ENCODE measurements at regions of chr17 and their contacts with region 1.

Region 1: DNA sequence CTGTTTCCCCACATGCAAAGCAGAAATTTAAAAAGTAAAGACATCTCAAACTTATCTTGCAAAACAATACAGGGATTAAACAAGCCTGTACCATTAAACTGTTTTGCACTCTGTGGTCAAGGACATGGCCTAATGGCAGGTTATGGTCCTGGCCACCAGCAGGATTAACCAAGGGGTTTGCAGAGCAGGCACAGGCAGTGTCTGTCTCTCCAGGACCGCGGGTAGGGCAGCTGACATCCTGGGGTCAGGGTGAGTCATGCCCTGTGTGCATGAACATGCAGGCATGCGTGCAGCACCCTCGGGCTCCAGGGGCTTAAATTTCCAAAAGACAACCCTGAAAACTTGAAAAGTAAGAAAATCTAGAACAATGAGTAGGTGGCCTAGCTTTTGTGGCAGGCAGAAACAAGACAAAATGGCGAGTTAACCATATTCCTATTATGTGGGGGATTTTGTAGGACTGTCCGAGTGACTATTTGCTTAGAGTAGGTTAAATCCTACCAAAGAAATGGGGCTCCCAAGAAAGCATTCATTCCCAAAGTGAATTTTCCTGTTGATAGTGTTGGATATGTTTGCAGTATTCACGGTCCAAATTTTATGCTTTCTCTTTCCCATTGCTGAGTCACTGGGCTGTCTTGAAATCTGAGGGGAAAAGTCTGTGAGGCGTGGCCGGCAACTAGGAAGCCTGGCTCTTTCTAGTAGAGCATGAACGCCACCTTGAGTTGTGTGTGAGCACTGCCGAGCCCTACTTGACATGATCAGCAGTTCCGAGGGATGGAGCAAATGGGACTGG is 158.4 kb upstream of the FAM20A start:
- DNase-seq: peak; percentile 86 to 89
- H3K4me3 ChIP-seq: peak overlapping the region; percentile 34
- H3K4me3 Mint-ChIP-seq: peak overlapping the region; percentile 77
- H3K27ac Mint-ChIP-seq: peak overlapping the region; percentile 89
- H3K4me1 ChIP-seq: peaks cover 13% of the 10 kb centered on the region
- H3K4me1 Mint-ChIP-seq: peaks cover 7% of the 10 kb centered on the region
- H3K27me3 ChIP-seq: no peaks in the 10 kb centered on the region
- H3K27me3 Mint-ChIP-seq: no peaks in the 10 kb centered on the region
- CTCF ChIP-seq: peak; percentile 92 to 93

Region 2: DNA sequence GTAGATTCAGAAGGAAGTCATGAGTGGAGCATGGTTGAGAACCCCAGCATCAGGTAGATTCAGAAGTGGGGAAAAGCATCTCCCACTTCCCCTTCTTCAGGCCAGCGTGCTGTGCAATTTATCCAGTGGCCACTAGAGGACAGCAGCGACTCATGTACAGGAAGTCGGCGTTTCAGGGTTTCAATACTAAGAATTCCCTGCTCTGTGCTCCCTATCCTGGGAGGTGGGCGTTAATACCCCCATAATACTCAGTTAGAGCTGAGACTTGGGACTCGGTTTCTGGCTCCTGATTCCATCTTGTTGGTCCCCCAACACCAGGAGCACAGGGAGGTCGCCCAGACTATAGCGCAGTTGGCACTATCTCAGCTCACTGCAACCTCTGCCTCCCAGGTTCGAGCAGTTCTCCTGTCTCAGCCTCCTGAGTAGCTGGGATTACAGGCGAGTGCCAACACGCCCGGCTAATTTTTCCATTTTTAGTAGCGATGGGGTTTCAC is 587.0 kb before region 1 on chr17:
- CTCF ChIA-PET with region 1: no interaction called
- POLR2A ChIA-PET with region 1: no interaction called
- intact Hi-C with region 1: loop called (anchors 10 kb)
- DNase-seq: peak; percentile 78
- H3K4me3 ChIP-seq: no peak overlapping the region
- H3K4me3 Mint-ChIP-seq: no peak overlapping the region
- H3K27ac Mint-ChIP-seq: no peak overlapping the region
- H3K4me1 ChIP-seq: no peaks in the 10 kb centered on the region
- H3K4me1 Mint-ChIP-seq: no peaks in the 10 kb centered on the region
- H3K27me3 ChIP-seq: no peaks in the 10 kb centered on the region; the same call in 1 of the 2 replicates
- H3K27me3 Mint-ChIP-seq: no peaks in the 10 kb centered on the region
- CTCF ChIP-seq: peak; percentile 92 to 98

Region 3: DNA sequence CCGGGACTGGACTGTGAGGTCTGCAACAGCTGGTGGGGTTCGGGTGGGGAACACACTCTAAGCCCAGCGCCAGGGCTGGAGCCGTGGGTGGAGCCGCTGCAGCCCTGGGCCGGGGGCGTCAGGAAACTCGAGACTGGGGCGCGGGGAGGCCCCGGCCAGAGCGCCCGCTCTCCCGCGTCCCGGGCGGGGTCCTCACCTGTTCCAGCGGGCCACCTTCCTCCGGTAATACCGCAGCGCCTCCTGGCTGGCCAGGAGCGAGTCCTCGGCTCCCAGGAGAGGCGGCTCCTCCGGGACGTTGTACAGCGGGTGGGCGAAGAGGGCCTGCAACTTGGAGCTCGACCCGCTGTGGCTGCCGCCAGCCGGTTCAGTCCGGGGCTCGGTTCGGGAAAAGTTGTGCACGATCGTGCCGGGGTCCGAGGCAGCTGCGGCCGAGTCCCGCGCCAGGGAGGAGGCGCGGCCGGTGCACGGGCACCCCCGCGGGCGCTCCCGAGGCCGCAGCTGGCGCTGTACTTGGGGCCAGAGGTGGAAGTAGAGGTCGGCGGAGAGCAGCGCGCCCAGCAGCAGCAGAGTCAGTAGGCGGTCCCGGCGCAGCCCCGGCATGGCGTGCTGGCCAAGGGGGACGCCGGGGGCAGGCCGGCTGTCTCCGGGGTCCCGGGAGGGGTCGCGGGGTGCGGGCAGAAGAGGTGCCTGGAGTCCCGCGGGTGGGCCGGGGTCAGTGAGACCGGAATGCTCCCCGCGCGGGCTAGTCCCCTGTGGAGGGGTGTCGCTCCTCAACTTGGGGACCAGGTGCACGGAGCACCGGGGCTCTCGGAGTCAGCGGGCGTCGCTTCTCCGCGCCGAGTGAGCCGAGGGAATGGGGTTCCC is 159.2 kb before region 1 on chr17:
- CTCF ChIA-PET with region 1: interaction called, 4 read pairs
- POLR2A ChIA-PET with region 1: no interaction called
- intact Hi-C with region 1: loop called (anchors 1 kb)
- DNase-seq: peak; percentile 49 to 66
- H3K4me3 ChIP-seq: peak overlapping the region; percentile 45
- H3K4me3 Mint-ChIP-seq: peak overlapping the region; percentile 61
- H3K27ac Mint-ChIP-seq: peak overlapping the region; percentile 63
- H3K4me1 ChIP-seq: peaks cover 15% of the 10 kb centered on the region
- H3K4me1 Mint-ChIP-seq: peaks cover 15% of the 10 kb centered on the region
- H3K27me3 ChIP-seq: no peaks in the 10 kb centered on the region
- H3K27me3 Mint-ChIP-seq: peaks cover 9% of the 10 kb centered on the region
- CTCF ChIP-seq: peak; percentile 27 to 61

Region 4: DNA sequence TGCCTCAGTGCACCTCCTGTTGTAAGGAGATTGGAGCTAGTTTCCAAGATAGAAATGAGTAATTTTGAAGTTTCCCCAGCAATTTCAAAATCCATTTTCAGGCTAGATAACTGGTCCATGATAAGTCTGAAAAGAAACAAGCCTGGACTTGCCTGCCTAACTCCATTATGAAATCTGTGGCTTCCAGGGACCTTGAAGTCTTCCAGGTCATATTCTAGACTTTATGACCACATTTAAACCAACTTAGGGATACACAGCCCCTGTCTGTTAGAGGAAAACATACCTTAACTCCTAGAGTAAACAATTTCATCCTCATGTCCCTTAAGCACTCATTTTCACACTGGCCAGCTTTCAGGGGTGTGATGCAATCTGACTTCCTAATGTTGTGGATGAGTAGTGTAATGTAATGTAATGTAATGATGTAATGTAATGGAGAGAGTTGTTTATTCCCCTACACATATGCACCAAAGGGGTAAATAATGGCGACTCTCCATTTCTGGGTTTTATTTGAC is 61.6 kb before region 1 on chr17:
- CTCF ChIA-PET with region 1: no interaction called
- POLR2A ChIA-PET with region 1: no interaction called
- intact Hi-C with region 1: loop called (anchors 2 kb)
- DNase-seq: peak; percentile 24 to 56
- H3K4me3 ChIP-seq: no peak overlapping the region
- H3K4me3 Mint-ChIP-seq: no peak overlapping the region
- H3K27ac Mint-ChIP-seq: no peak overlapping the region
- H3K4me1 ChIP-seq: peaks cover 41% of the 10 kb centered on the region
- H3K4me1 Mint-ChIP-seq: peaks cover 22% of the 10 kb centered on the region
- H3K27me3 ChIP-seq: no peaks in the 10 kb centered on the region
- H3K27me3 Mint-ChIP-seq: no peaks in the 10 kb centered on the region
- CTCF ChIP-seq: no peak

Region 5: GRCh38 chr17:68740555-68741447 is 18.7 kb before region 1 on chr17:
- CTCF ChIA-PET with region 1: no interaction called
- POLR2A ChIA-PET with region 1: no interaction called
- intact Hi-C with region 1: loop called (anchors 1 kb)
- DNase-seq: no peak
- H3K4me3 ChIP-seq: no peak overlapping the region
- H3K4me3 Mint-ChIP-seq: no peak overlapping the region
- H3K27ac Mint-ChIP-seq: no peak overlapping the region
- H3K4me1 ChIP-seq: 0 out of 2 replicates have a peak, but pooled peaks cover 3% of the 10 kb centered on the region
- H3K4me1 Mint-ChIP-seq: no peaks in the 10 kb centered on the region
- H3K27me3 ChIP-seq: no peaks in the 10 kb centered on the region
- H3K27me3 Mint-ChIP-seq: no peaks in the 10 kb centered on the region
- CTCF ChIP-seq: peak; percentile 40 to 50